ENCODE measurements at regions of chr5 and their contacts with region 1.

Region 1: GRCh38 chr5:150045546-150045945 is 40.8 kb downstream of the CSF1R start:
- DNase-seq: no peak
- H3K4me3 ChIP-seq: no peak overlapping the region
- H3K27ac ChIP-seq: no peak overlapping the region
- H3K4me1 ChIP-seq: no peaks in the 10 kb centered on the region
- H3K27me3 ChIP-seq: no peaks in the 10 kb centered on the region
- CTCF ChIP-seq: peak; percentile 44 to 50 (median 47)
- EP300 ChIP-seq: no peak
- POLR2A ChIP-seq: no peak
- RAD21 ChIP-seq: peak; percentile 44 to 59; a peak in 3 of 4 replicates

Region 2: GRCh38 chr5:150035139-150035893 is 10.2 kb before region 1 on chr5:
- CTCF ChIA-PET with region 1: interaction called, 10 read pairs
- POLR2A ChIA-PET with region 1: no interaction called
- DNase-seq: no peak
- H3K4me3 ChIP-seq: no peak overlapping the region
- H3K27ac ChIP-seq: no peak overlapping the region
- H3K4me1 ChIP-seq: no peaks in the 10 kb centered on the region
- H3K27me3 ChIP-seq: no peaks in the 10 kb centered on the region
- CTCF ChIP-seq: no peak
- EP300 ChIP-seq: no peak
- POLR2A ChIP-seq: no peak
- RAD21 ChIP-seq: no peak